Ascending aorta (tissue), 2 donors: ENCODE measurements at regions of chrX and their contacts with region 1.

Region 1: GRCh38 chrX:131841496-131842410 is 181.3 kb upstream of the STK26 start:
- DNase-seq: no peak
- H3K4me3 ChIP-seq: no peak overlapping the region
- H3K27ac ChIP-seq: no peak overlapping the region
- H3K4me1 ChIP-seq: no peaks in the 10 kb centered on the region
- H3K27me3 ChIP-seq: no peaks in the 10 kb centered on the region
- CTCF ChIP-seq: peak; percentile 66 to 90 (median 87)

Region 2: GRCh38 chrX:131677655-131678628 is 163.8 kb before region 1 on chrX:
- intact Hi-C with region 1: loop called (anchors 2 kb)
- DNase-seq: no peak
- H3K4me3 ChIP-seq: no peak overlapping the region
- H3K27ac ChIP-seq: no peak overlapping the region
- H3K4me1 ChIP-seq: no peaks in the 10 kb centered on the region
- H3K27me3 ChIP-seq: no peaks in the 10 kb centered on the region
- CTCF ChIP-seq: peak in 2 of 3 experiments; percentile 58 to 64

Region 3: GRCh38 chrX:132071260-132071659 is 229.5 kb after region 1 on chrX:
- intact Hi-C with region 1: loop called (anchors 2 kb)
- DNase-seq: no peak
- H3K4me3 ChIP-seq: no peak overlapping the region
- H3K27ac ChIP-seq: no peak overlapping the region
- H3K4me1 ChIP-seq: no peaks in the 10 kb centered on the region
- H3K27me3 ChIP-seq: no peaks in the 10 kb centered on the region
- CTCF ChIP-seq: peak in 1 of 3 experiments; percentile 29

Region 4: GRCh38 chrX:132219343-132219768 is 377.6 kb after region 1 on chrX and contains the start of gene RAP2C:
- intact Hi-C with region 1: loop called (anchors 2 kb)
- DNase-seq: peak; percentile 33 to 84
- H3K4me3 ChIP-seq: peak within 1 kb of the TSS; percentile 53 to 69
- H3K27ac ChIP-seq: peak within 1 kb of the TSS; percentile 91 to 96
- H3K4me1 ChIP-seq: peaks cover 0 to 6% of the 10 kb centered on the region in 2 donors
- H3K27me3 ChIP-seq: no peaks in the 10 kb centered on the region
- CTCF ChIP-seq: peak; percentile 38 to 59 (median 51)
- total RNA-seq, gene RAP2C: 3.4 TPM

Region 5: DNA sequence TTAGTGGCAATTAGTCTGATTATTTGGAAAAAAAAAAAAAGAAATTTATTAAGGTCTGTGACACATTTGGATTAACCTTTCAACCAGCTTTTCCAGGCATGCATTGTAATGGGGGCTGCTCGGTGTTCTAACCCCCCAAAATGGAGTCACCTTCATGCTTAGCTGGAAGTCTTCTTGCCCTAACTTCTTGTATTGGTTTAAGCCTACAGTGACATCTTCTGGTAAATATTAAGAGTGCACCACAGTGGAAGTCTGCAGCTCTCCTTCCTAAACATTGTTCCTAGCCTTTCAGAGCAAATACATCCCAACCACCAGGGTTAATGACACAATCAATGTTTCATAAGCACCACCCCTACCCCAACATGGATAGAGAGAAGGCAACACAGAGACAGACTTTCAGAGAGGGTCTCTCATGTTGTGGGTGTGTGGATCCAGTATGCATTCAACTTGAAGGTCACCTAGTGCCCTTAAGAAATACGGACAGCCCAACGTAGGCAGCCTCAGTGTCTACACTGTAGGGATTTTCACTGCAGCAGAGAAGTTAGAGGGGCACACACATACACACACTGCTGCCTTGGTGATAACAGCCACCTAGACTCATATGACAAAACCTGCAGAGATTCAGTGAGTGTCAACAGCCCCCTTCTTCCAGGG is 790.0 kb after region 1 on chrX:
- intact Hi-C with region 1: loop called (anchors 5 kb)
- DNase-seq: no peak
- H3K4me3 ChIP-seq: no peak overlapping the region
- H3K27ac ChIP-seq: no peak overlapping the region
- H3K4me1 ChIP-seq: no peaks in the 10 kb centered on the region
- H3K27me3 ChIP-seq: no peaks in the 10 kb centered on the region
- CTCF ChIP-seq: peak in 2 of 3 experiments; percentile 21 to 58

Region 6: GRCh38 chrX:132909643-132910042 is 1067.9 kb after region 1 on chrX:
- intact Hi-C with region 1: no loop called
- DNase-seq: no peak
- H3K4me3 ChIP-seq: no peak overlapping the region
- H3K27ac ChIP-seq: no peak overlapping the region
- H3K4me1 ChIP-seq: no peaks in the 10 kb centered on the region
- H3K27me3 ChIP-seq: no peaks in the 10 kb centered on the region
- CTCF ChIP-seq: no peak